GM10248 (cell line): ENCODE measurements at regions of chr11 and their contacts with region 1.

Region 1: GRCh38 chr11:125887373-125888324 is at the start of gene HYLS1:
- DNase-seq: peak; percentile 93
- CTCF ChIP-seq: peak; percentile 40

Region 2: DNA sequence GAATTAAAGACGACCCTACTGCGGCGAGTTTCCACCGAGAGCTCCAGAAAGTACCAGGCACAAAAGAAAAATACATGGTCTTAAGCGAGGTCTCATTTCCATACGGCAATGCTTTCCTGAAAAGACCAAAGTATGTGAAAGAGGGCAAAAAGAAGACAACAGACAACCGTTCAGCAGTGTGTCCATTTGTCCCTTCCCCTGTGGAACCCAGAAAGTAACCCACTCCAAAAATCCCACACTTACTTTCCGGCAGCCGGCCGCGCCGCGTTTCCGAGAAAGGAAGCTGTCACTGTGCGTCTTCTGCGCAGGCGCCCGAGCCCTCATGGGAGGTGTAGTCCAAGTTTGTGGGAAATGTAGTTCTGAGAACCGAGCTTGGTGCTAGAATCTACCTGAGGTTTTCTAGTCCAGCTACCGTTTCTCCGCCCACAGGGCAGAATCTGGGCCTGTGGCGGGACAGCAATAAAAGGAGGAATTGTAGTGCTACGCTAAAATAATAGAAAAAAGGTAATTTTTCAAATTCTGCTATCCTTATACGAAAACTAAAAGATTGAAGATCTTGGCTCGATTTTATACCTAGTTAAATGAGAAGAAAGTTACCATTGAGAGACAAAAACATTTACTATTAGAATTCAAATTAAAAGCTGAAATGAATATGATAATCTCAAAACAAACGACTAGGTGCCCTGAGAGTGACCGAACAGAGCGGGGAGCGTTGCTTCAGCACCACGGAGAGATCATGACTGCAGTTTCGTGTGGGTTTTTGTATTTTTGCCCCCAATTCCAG is 15.5 kb after region 1 on chr11 and contains the start of gene PUS3:
- CTCF ChIA-PET with region 1: interaction called, 11 read pairs
- POLR2A ChIA-PET with region 1: interaction called, 3 read pairs
- DNase-seq: peak; percentile 91
- CTCF ChIP-seq: no peak

Region 3: GRCh38 chr11:125939081-125939521 is 51.5 kb after region 1 on chr11:
- CTCF ChIA-PET with region 1: no interaction called
- POLR2A ChIA-PET with region 1: no interaction called
- DNase-seq: no peak
- CTCF ChIP-seq: no peak